Activated T-helper 1 cell treated with anti-CD3 and anti-CD28 coated beads, Interleukin-12 subunit alpha, Interleukin-12 subunit beta, Interleukin-2, Interleukin-4 antibody, amounts not matched to agents 30 ng/mL and 10 ng/mL and 1 ng/mL, durations not matched to agents 14 hours and 24 hours and 36 hours (primary cell): ENCODE measurements at regions of chr12 and their contacts with region 1.

Region 1: DNA sequence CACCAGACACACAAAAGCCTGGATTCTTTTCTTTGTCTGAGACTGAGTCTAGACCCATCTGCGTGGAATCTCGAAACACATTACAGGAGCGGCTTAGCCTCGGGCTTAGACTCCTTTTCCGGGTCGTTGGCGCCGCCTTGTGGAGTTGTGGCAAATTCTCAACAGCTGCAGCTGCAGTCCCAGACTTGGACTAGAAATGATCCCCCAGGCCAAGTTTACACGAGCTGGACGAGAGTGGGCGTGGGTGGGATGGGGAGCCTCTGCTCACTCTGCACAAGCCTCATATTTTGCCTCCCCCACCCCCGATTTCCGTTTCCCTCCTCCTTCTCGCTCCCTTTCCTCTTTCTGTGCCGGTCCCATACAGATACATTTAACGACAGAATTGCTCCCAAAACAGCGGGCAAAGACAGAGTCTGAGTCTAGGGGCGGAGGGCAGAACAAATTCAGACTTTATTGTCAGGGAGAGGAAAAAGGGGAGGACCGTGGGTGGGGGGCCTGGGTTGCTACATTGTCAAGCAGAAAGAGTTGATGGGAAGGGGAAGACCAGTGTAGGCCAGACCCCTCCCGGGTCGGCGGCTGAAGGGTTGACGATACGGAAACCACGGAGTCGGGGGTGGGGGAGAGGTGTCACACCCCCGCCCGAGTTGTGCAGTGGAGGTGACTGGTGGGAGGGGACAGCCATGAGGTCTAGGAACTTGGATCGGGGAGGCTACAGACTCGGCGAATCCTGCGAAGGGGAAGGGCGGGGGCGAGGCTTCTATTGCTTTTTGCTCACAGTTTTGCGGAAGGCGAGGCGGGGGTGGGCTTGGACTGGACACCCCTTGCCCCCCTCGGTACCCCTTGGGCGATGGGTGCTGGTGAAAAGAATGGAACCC is 4.7 kb upstream of the GPR84 start:
- DNase-seq: peak; percentile 76
- H3K4me3 Mint-ChIP-seq: peak overlapping the region; percentile 65
- H3K27ac Mint-ChIP-seq: peak overlapping the region; percentile 61
- H3K4me1 Mint-ChIP-seq: peaks cover 43% of the 10 kb centered on the region
- H3K27me3 Mint-ChIP-seq: peaks cover 12% of the 10 kb centered on the region

Region 2: GRCh38 chr12:54220092-54220557 is 148.8 kb before region 1 on chr12:
- intact Hi-C with region 1: loop called (anchors 1 kb)
- DNase-seq: peak; percentile 52
- H3K4me3 Mint-ChIP-seq: no peak overlapping the region
- H3K27ac Mint-ChIP-seq: no peak overlapping the region
- H3K4me1 Mint-ChIP-seq: peaks cover 16% of the 10 kb centered on the region
- H3K27me3 Mint-ChIP-seq: peaks cover 2% of the 10 kb centered on the region

Region 3: DNA sequence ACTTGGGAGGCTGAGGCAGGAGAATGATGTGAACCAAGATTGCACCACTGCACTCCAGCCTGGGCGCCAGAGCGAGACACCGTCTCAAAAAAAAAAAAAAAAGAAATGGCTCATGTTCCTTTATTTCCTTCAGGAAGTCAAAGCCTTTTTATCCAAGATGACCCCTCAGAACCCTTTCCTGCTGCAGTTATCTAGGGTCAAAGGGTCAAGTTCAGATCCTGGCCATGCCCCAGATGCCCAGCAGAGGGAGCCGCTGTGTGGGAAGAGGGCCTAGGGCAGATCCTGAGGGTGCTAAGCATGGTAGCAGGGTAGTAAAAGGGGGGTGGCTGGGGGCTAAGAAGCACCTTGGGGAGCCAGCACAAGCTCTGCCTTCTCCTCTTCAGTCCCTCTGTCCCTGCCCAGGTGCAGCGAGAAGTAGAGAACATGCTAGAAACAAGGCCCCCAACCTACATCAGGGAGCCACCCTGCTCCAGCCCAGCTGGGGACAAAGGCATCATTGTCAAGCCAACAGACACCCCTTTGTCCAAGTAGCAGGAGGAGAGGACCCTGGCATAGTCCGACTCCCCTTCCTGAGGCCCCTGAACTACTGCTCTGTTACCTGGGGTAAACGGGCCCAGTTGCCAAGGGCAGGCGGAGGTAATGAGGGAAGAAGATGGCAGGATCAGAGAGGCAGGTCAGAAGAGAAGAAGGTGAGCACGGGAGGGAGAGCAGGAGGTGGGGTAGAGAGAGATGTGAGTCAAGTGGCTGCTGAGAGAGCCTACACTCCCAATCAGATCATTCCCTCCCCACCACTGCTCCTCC is 74.6 kb before region 1 on chr12:
- intact Hi-C with region 1: loop called (anchors 1 kb)
- DNase-seq: peak; percentile 46
- H3K4me3 Mint-ChIP-seq: no peak overlapping the region
- H3K27ac Mint-ChIP-seq: no peak overlapping the region
- H3K4me1 Mint-ChIP-seq: peaks cover 4% of the 10 kb centered on the region
- H3K27me3 Mint-ChIP-seq: peaks cover 16% of the 10 kb centered on the region

Region 4: GRCh38 chr12:54337280-54337842 is 31.6 kb before region 1 on chr12:
- intact Hi-C with region 1: loop called (anchors 1 kb)
- DNase-seq: no peak
- H3K4me3 Mint-ChIP-seq: no peak overlapping the region
- H3K27ac Mint-ChIP-seq: no peak overlapping the region
- H3K4me1 Mint-ChIP-seq: peaks cover 21% of the 10 kb centered on the region
- H3K27me3 Mint-ChIP-seq: no peaks in the 10 kb centered on the region

Region 5: GRCh38 chr12:54475537-54475936 is 106.6 kb after region 1 on chr12:
- intact Hi-C with region 1: no loop called
- DNase-seq: no peak
- H3K4me3 Mint-ChIP-seq: no peak overlapping the region
- H3K27ac Mint-ChIP-seq: no peak overlapping the region
- H3K4me1 Mint-ChIP-seq: no peaks in the 10 kb centered on the region
- H3K27me3 Mint-ChIP-seq: peaks cover 16% of the 10 kb centered on the region